Activated T-helper 2 cell treated with anti-CD3 and anti-CD28 coated beads, Interferon-gamma antibody, Interleukin-2, Interleukin-4, amounts not matched to agents 10 μg/mL and 5 μg/mL and 100 μg/mL, durations not matched to agents 14 hours and 24 hours and 36 hours (primary cell): ENCODE measurements at regions of chr1 and their contacts with region 1.

Region 1: DNA sequence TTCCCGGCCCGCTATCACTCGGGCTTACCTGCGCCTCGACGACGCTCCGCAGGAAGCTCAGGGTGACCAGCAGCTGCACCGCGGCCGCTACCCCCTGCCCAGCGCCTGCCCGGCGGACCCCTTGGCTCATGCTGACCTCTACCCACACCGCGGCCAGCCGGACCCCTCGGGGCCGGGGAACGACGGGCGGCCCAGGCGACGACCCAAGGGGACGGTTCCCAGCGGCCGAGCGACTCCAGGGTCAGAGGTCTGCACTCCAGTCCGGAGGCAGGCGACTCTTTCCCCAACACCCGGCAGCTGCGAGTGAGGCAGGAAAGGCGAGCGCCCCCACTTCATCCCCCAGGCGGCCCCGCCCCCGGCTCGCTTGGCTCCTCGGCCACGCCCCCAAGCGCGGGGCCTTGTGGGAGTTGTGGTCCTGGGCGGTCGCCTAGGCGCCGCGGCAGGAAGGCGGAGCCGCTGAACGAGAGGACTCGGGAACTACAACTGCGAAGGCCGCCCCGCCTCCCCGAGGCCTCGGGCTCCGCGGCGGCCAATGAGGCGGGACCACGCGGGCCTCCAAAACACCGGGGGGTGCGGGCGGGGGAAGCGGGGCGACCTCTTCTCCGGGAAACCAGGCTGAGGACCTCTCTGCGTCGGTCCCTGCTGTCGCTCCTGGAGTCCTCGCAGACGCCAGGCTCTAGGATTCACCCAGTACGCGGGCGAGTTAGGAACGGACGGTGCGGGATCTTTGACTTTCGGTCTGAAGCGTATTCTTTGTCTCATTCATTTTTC is at the start of gene ERO1B:
- DNase-seq: peak; percentile 96
- H3K4me3 Mint-ChIP-seq: peak within 1 kb of the TSS; percentile 83
- H3K27ac Mint-ChIP-seq: peak within 1 kb of the TSS; percentile 53
- H3K4me1 Mint-ChIP-seq: peaks cover 34% of the 10 kb centered on the region
- H3K27me3 Mint-ChIP-seq: peaks cover 22% of the 10 kb centered on the region
- total RNA-seq, gene ERO1B: 2.4 and 3.2 TPM in 2 replicates

Region 2: GRCh38 chr1:236120721-236121153 is 161.1 kb before region 1 on chr1:
- intact Hi-C with region 1: loop called (anchors 5 kb)
- DNase-seq: no peak
- H3K4me3 Mint-ChIP-seq: peak overlapping the region; percentile 45
- H3K27ac Mint-ChIP-seq: peak overlapping the region; percentile 29
- H3K4me1 Mint-ChIP-seq: peaks cover 29% of the 10 kb centered on the region
- H3K27me3 Mint-ChIP-seq: peaks cover 19% of the 10 kb centered on the region

Region 3: DNA sequence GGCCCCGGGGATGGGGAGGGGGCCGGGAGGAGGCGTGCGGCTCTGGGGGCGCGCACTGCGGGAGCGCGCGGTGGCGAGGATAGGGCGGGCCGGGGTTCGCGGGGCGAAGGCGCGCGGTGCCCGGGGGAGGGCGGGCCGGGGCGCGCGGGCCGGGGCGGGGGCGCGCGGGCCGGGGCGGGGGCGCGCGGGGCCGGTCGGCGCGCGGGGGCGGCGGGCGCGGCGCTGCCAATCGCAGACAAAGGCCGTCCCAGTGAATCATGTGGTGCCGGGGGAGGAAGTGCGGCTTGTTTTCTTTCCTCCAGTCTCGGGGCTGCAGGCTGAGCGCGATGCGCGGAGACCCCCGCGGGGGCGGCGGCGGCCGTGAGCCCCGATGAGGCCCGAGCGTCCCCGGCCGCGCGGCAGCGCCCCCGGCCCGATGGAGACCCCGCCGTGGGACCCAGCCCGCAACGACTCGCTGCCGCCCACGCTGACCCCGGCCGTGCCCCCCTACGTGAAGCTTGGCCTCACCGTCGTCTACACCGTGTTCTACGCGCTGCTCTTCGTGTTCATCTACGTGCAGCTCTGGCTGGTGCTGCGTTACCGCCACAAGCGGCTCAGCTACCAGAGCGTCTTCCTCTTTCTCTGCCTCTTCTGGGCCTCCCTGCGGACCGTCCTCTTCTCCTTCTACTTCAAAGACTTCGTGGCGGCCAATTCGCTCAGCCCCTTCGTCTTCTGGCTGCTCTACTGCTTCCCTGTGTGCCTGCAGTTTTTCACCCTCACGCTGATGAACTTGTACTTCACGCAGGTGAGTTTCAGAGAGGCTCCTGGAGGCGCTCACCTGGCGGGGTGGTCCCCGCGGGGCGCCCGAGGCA is 139.4 kb before region 1 on chr1 and contains the start of gene GPR137B:
- intact Hi-C with region 1: loop called (anchors 5 kb)
- DNase-seq: peak; percentile 51
- H3K4me3 Mint-ChIP-seq: peak within 1 kb of the TSS; percentile 99
- H3K27ac Mint-ChIP-seq: peak within 1 kb of the TSS; percentile 81
- H3K4me1 Mint-ChIP-seq: peaks cover 16% of the 10 kb centered on the region
- H3K27me3 Mint-ChIP-seq: peaks cover 42% of the 10 kb centered on the region
- total RNA-seq, gene GPR137B: 6.8 and 7.8 TPM in 2 replicates

Region 4: GRCh38 chr1:236370420-236370819 is 88.6 kb after region 1 on chr1:
- intact Hi-C with region 1: loop called (anchors 1 kb)
- DNase-seq: no peak
- H3K4me3 Mint-ChIP-seq: no peak overlapping the region
- H3K27ac Mint-ChIP-seq: peak overlapping the region; percentile 67
- H3K4me1 Mint-ChIP-seq: peaks cover 13% of the 10 kb centered on the region
- H3K27me3 Mint-ChIP-seq: peaks cover 10% of the 10 kb centered on the region

Region 5: DNA sequence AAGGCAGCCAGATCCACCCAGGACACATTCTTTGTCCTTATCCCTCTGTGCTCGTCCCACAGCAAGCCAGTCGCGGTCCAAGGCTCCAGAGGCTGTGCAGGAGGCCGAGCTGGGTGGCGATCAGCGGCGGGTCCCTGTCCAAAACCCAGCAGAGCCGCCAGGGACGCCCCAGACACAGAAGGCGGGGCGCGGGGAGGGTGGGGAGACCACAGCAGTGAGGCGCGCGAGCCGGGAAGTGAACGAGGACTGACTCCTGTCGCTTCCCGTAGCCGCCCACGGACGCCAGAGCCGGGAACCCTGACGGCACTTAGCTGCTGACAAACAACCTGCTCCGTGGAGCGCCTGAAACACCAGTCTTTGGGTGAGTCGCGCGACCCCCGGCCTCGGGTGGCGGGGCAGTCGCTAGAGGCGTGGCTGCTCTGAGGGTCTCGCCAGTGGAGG is 241.9 kb after region 1 on chr1 and contains the start of gene LGALS8:
- intact Hi-C with region 1: loop called (anchors 5 kb)
- DNase-seq: peak; percentile 80
- H3K4me3 Mint-ChIP-seq: peak within 1 kb of the TSS; percentile 98
- H3K27ac Mint-ChIP-seq: peak within 1 kb of the TSS; percentile 99
- H3K4me1 Mint-ChIP-seq: peaks cover 14% of the 10 kb centered on the region
- H3K27me3 Mint-ChIP-seq: peaks cover 18% of the 10 kb centered on the region
- total RNA-seq, gene LGALS8: 70.9 and 74.8 TPM in 2 replicates

Region 6: GRCh38 chr1:236795035-236795756 is 513.4 kb after region 1 on chr1 and contains the start of gene MTR:
- intact Hi-C with region 1: loop called (anchors 1 kb)
- DNase-seq: peak; percentile 94
- H3K4me3 Mint-ChIP-seq: peak within 1 kb of the TSS; percentile 92
- H3K27ac Mint-ChIP-seq: peak within 1 kb of the TSS; percentile 98
- H3K4me1 Mint-ChIP-seq: peaks cover 32% of the 10 kb centered on the region
- H3K27me3 Mint-ChIP-seq: peaks cover 10% of the 10 kb centered on the region
- total RNA-seq, gene MTR: 59.2 and 62.2 TPM in 2 replicates

Region 7: DNA sequence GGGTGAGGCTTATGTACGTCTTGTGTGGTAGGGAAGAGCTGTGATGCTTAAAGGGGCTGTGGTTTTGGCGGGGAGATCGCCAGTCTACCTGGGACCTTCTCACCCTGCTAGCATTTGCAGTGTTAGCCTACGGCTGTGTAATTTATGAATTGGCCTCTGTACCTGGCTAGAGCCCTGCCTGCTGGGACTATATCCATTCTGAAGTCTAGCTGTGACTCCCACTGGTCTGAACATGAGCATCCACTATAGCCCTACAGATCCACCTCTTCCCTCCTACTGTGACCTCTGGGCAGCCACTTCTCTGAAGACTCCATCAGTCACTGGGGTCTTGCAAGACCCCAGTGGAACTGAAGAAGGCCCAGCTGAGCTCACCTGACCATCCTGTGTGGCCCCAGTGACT is 648.7 kb after region 1 on chr1:
- intact Hi-C with region 1: no loop called
- DNase-seq: no peak
- H3K4me3 Mint-ChIP-seq: no peak overlapping the region
- H3K27ac Mint-ChIP-seq: no peak overlapping the region
- H3K4me1 Mint-ChIP-seq: no peaks in the 10 kb centered on the region
- H3K27me3 Mint-ChIP-seq: no peaks in the 10 kb centered on the region